Dendritic cell treated with granulocyte-macrophage colony-stimulating factor and Interleukin-4, amounts not matched to agents 40 ng/mL and 50 ng/mL, for 4 days (primary cell): ENCODE measurements at regions of chr1 and their contacts with region 1.

Region 1: DNA sequence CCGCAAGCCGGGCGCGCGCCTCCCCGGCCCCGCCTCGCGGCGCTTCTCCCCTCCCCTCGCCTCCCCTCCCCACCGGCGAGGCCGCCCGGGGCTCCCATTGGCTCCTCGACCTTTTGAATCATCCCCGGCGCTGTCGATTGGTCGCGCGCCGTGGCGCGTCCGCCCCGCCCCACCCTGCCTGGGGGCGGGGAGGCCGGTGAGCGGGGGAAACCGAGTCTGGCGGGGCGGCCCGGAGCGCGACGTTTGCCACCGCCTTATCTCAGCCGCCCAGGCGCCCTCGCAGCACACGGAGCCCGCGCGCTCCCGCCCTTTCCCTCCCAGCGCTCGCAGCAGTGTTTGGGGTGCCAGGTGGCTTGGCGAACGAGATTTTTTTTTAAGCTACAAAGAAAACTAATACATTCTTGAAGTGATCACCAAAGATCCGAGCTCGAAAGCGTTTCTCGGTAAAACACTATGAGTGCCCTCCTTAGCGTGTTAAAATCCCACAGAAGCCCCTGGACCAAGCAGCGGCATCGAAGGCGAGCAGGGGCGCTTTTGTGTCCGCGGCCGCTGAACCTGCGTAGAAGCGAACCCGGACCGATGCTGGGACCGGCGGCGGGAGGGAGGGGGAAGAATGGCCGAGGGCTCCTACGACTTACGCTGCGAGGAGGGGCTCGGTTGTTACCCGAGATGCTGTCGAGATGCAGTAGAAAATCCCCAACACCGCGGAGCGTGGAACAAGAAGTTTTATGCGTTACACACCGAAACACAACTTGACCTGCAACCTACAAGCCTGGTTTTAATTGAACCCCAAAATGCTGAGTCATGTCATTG is 436 bp upstream of the LBR start:
- H3K4me3 Mint-ChIP-seq: peak overlapping the region; percentile 84
- H3K27ac Mint-ChIP-seq: peak overlapping the region; percentile 78
- H3K4me1 Mint-ChIP-seq: peaks cover 34% of the 10 kb centered on the region
- H3K27me3 Mint-ChIP-seq: peaks cover under 1% of the 10 kb centered on the region

Region 2: DNA sequence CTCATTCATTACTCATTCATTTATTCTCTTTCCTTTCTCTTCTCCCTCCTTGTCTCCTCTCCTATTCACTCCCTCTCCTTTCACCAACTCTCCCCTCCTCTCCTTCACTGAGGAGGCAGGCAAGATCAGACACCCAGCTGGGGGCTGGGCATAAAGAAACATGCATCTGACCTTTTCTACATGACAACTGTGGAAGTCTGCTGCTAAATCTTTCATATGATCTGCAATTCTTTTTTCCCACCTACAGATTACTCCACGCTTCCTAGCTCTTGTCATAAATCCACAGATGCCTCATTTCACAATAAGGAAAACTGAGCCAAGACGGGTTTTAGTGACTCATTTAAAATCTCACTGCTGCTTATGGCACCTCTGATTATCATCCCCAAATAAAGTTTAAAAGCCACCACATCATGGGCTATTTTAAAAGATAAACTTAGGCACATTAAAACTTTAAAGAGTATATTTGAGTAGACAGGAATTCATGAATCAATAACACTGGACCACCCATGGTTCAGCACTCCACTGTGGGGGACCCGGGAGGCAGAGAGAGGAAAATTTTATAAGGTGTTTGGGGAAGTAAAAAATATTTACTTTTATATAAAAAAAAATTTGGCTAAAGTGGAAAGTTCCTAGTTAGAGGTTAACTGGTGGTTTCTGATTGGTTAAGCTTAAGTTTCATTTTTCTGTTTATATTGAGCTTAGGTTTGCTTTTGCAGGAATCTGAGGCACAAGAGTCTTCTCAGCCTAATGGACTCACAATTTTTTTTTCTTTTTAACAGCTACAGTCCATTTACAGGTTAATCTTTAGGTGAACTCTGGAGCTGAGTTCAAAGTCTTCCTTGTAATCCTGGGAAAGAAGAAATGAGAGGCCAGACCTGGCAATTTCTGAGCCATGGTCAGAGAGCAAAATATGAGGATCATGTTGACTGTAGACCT is 554.6 kb before region 1 on chr1:
- intact Hi-C with region 1: no loop called
- H3K4me3 Mint-ChIP-seq: no peak overlapping the region
- H3K27ac Mint-ChIP-seq: no peak overlapping the region
- H3K4me1 Mint-ChIP-seq: no peaks in the 10 kb centered on the region
- H3K27me3 Mint-ChIP-seq: peaks cover 9% of the 10 kb centered on the region

Region 3: GRCh38 chr1:225242623-225243022 is 185.7 kb before region 1 on chr1:
- intact Hi-C with region 1: no loop called
- H3K4me3 Mint-ChIP-seq: no peak overlapping the region
- H3K27ac Mint-ChIP-seq: no peak overlapping the region
- H3K4me1 Mint-ChIP-seq: peaks cover 6% of the 10 kb centered on the region
- H3K27me3 Mint-ChIP-seq: no peaks in the 10 kb centered on the region

Region 4: DNA sequence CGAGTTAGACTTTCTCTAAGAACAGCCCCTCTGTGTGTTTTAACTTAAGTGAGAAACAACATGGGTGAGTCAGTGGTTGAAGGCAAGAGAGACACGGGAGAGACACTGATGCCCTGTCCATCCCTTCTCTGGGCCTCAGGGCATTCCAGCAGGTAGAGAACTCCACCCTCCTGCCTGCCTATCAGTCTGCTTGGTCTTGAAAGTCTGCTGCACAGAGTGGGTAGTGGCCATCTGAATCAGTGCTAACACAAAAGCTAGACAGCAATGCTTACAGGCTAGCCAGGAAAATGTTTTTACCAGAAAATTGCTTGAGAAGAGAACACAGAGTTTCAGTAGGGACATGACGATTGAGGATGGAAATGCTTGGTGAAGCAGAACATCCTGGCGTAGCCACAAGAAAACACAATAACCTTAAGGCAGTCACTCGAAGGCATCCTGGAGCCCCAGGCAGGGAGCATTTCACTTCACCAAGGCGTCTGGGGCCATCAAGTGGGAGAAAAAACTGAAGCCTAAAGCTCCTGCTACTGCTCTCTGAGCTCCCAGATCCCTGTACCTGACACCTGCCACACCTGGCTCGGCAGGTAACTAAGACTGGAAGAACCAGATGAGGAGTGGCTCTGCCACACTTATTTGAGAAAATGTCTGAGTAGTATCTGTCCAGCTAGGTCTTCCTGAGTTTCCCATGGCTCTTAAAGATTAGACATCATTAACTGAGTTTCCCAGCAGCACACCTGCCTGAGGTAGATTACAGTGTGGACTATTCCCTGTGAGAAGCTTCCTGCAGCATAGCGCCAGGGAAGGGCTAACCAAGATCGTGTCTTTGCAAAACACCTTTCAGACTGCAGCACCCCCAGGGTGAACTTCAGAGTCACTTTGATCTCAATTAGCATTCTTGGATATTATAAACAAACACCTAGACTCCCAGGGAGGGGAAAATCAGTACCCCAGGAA is 17.6 kb after region 1 on chr1:
- intact Hi-C with region 1: loop called (anchors 1 kb)
- H3K4me3 Mint-ChIP-seq: peak overlapping the region; percentile 58
- H3K27ac Mint-ChIP-seq: peak overlapping the region; percentile 78
- H3K4me1 Mint-ChIP-seq: peaks cover 88% of the 10 kb centered on the region
- H3K27me3 Mint-ChIP-seq: no peaks in the 10 kb centered on the region